ENCODE measurements at regions of chr10 and their contacts with region 1.

Region 1: DNA sequence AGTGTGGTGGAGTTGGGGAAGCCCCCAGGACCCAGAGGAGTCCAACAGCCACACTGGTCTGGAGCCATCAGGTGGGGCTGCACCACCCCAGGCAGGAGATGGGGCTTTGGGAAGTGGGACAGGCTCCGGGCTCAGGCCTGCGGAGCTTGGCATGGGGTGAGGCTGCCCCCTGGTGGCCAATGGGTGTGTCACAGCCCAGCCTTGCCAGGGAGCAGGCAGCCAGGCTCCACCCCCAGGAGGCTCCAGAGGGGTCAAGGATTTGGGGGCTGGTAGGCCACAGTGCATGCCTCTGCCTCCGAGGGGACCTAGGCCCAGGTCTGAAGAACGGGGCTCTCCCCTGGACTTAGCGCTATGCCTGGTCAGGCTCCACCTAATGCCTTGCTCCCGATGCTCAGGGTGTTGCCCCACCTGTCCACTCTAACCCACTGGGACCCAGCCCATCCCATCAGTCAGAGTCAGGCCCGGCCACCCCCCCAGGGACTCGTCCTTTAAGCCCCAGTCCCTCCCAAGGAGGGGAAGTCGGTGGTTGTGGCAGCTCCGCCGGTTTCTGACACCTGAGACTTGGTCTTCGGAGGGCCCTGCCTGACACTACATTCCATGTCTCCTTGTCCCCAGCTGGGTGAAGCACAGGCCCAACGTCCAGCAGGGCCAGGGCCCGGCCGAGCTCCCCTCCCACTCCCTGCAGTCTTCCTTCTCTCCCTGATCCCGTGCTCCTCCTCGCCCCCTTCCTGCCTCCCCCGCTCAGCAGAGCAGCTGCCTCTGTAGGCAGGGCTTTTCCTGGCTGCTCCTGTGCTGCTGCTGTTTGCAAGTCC is 11.3 kb upstream of the SAMD8 start:
- DNase-seq: peak; percentile 91

Region 2: GRCh38 chr10:74244097-74244685 is 856.0 kb before region 1 on chr10:
- intact Hi-C with region 1: loop called (anchors 5 kb)
- DNase-seq: no peak

Region 3: DNA sequence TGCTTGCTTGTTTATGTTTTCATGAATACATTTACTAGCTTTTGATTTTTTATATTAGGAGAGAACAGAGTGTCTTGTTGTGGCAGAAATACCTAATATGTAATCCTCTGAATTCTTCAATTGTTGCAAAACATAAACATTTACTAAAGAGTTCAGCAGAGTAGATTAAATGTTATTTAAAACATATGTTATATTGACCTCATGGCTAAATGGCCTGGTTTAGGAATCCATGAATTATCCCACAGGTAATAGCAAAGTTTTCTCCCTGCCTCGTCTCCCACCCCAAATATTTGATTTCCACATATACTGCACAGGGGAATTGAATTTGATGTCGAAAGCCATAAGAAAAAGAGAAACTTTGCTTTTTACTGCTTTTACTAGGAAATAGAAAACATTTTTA is 837.3 kb before region 1 on chr10:
- intact Hi-C with region 1: loop called (anchors 2 kb)
- DNase-seq: no peak

Region 4: DNA sequence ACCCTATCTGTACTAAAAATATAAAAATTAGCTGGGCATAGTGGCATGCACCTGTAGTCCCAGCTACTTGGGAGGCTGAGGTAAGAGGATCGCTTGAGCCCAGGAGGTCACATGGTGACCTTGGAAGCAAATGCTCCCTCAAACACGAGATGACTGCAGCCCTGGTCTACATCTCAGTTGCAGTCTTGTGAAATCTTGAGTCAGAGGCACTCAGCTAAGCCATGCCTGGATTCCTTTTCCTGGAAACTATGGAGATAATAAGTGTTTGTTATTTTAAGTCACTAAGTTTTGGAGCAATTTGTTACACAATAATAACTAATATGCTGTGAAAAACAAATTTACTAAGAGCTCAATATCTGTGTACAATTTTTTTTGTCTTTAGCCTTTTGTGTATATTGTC is 558.1 kb before region 1 on chr10:
- intact Hi-C with region 1: no loop called
- DNase-seq: no peak